Calu3 (cell line): ENCODE measurements at regions of chr6 and their contacts with region 1.

Region 1: DNA sequence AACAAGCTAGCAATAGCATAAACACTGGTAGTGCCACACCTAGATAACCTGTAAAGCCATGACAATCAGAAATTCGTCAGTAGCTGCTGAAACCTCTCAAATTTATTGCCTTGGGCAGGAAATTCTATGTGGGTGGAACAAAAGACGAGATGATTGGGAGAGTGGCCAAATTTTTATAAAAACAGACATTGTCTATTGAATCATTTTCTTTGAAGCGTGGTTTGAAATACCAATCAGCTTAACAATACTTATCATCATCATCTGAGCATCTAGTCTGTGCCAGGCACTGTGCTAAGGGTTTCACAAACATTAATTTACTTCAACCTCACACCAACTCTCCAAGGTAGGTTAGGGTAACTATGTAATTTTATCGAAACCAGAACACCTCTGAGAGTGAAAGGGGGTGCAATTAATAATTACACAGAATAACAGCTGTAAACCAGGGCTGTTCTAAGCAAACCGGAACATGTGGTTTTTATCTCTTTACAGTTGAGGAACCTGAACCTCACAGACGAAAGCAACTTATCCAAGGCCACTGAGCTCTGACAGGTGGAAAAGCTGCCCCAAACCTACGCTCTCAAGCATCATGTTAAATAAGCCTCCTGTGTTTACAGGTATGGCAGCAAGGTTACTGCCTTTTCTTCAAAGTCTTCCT is 43.4 kb downstream of the NHSL1 start:
- DNase-seq: peak; percentile 33
- H3K4me3 Mint-ChIP-seq: peak overlapping the region; percentile 14
- H3K27ac Mint-ChIP-seq: peak overlapping the region; percentile 91
- H3K4me1 Mint-ChIP-seq: peaks cover 34% of the 10 kb centered on the region
- H3K27me3 Mint-ChIP-seq: no peaks in the 10 kb centered on the region
- CTCF ChIP-seq: no peak

Region 2: DNA sequence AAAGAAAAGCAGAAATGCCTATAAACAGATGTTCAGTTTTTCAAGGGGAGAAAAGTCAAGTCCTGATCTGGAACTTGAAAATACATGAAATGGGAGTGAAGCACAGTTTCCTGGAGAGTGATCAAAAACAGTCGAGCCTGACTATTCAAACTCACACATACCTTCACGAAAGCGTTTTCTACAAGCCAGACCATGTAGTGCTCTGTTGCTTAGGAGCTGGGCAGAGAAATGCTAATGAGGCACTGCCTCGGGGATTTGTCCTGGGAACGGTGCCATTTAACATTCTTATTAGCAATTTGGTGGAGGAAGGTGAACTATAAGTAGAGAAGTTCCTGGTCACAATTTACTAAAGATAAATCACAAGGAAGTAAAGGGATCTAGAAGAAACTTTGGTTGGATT is 37.5 kb after region 1 on chr6:
- CTCF ChIA-PET with region 1: interaction called, 3 read pairs
- intact Hi-C with region 1: loop called (anchors 5 kb)
- DNase-seq: peak; percentile 39
- H3K4me3 Mint-ChIP-seq: peak overlapping the region; percentile 19
- H3K27ac Mint-ChIP-seq: peak overlapping the region; percentile 63
- H3K4me1 Mint-ChIP-seq: peaks cover 31% of the 10 kb centered on the region
- H3K27me3 Mint-ChIP-seq: no peaks in the 10 kb centered on the region
- CTCF ChIP-seq: no peak

Region 3: DNA sequence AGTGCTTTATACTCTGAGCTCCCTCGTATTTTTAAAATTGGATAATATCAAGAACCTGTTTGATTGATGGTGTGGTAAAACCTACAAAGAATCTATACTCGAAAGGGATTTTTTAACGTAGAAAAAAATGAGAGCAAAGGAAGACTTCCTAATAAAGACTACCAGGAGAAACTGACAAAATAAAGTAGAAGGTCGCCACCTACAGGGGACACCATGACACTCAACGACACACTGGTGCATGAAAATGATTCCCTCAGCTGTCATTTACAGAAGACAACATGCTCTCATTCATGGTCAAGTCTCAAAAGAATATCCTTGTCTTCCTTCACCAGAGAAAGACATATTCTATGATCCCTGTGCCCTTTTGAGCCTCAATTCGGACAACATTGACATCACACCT is 53.5 kb after region 1 on chr6:
- CTCF ChIA-PET with region 1: interaction called, 8 read pairs
- intact Hi-C with region 1: loop called (anchors 2 kb)
- DNase-seq: peak; percentile 54
- H3K4me3 Mint-ChIP-seq: no peak overlapping the region
- H3K27ac Mint-ChIP-seq: no peak overlapping the region
- H3K4me1 Mint-ChIP-seq: peaks cover 32% of the 10 kb centered on the region
- H3K27me3 Mint-ChIP-seq: no peaks in the 10 kb centered on the region
- CTCF ChIP-seq: peak; percentile 20